Testis (tissue), 5 donors: ENCODE measurements at regions of chr2 and their contacts with region 1.

Region 1: GRCh38 chr2:207473049-207473930 is 56.5 kb upstream of the CREB1 start:
- DNase-seq: peak; percentile 71
- H3K4me3 ChIP-seq: no peak overlapping the region
- H3K27ac ChIP-seq: no peak overlapping the region
- H3K4me1 ChIP-seq: peaks cover 9% of the 10 kb centered on the region
- H3K27me3 ChIP-seq: no peaks in the 10 kb centered on the region
- CTCF ChIP-seq: peak; percentile 38 to 59 (median 50)
- POLR2A ChIP-seq: no peak

Region 2: DNA sequence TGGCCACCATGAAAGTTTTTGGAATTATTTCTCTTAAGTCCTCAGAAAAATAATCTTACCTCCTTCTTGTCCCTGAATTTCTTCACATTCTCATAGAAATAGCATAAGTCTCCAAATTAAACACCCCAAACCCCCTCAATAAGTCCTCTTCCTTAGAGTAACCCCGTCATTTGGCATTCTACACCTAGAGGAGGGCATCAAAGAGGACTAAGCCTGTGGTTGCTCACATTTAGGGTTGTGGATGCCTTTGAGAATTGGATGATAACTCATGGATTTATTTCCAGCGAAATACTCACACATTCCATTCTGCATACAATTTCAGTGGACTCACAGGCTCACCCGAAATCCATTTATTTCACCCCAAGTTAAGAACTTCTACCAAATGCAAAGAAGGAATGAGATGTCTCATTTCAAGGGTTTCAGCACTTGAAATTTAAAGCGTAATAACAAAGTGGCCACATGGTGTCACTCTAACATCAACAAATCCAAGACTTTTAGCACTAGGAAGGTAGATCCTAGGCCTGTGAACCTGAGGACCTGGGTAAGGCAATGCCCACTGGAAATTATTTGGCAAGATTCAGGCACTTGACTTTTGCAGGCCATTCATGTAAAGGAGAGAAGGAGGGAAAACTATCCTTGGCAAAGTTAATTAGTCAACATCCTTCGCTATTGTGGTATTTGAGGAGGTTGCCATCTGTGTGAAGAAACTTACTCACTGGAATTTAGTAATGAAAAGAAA is 779.7 kb before region 1 on chr2:
- intact Hi-C with region 1: loop called (anchors 10 kb)
- DNase-seq: peak; percentile 49
- H3K4me3 ChIP-seq: no peak overlapping the region
- H3K27ac ChIP-seq: no peak overlapping the region
- H3K4me1 ChIP-seq: no peaks in the 10 kb centered on the region
- H3K27me3 ChIP-seq: no peaks in the 10 kb centered on the region
- CTCF ChIP-seq: peak; percentile 30 to 74 (median 56)
- POLR2A ChIP-seq: no peak

Region 3: DNA sequence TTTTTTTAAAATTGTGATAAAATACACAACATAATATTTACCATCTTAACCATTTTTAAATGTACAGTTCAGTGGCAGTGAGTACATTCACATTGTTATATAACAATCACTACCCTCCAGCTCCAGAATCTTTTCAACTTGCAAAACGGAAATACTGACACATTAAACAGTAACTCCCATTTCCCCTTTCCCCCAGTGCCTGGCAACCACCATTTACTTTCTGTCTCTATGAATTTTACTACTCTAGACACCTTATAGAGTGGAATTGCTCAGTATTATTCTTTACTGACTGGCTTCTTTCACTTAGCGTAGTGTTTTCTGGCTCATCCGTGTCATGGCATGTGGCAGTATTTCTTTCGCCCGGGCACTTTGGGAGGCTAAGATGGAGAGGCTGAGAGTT is 675.3 kb before region 1 on chr2:
- intact Hi-C with region 1: loop called (anchors 10 kb)
- DNase-seq: no peak
- H3K4me3 ChIP-seq: no peak overlapping the region
- H3K27ac ChIP-seq: no peak overlapping the region
- H3K4me1 ChIP-seq: peaks cover 3% of the 10 kb centered on the region
- H3K27me3 ChIP-seq: no peaks in the 10 kb centered on the region
- CTCF ChIP-seq: no peak
- POLR2A ChIP-seq: no peak

Region 4: DNA sequence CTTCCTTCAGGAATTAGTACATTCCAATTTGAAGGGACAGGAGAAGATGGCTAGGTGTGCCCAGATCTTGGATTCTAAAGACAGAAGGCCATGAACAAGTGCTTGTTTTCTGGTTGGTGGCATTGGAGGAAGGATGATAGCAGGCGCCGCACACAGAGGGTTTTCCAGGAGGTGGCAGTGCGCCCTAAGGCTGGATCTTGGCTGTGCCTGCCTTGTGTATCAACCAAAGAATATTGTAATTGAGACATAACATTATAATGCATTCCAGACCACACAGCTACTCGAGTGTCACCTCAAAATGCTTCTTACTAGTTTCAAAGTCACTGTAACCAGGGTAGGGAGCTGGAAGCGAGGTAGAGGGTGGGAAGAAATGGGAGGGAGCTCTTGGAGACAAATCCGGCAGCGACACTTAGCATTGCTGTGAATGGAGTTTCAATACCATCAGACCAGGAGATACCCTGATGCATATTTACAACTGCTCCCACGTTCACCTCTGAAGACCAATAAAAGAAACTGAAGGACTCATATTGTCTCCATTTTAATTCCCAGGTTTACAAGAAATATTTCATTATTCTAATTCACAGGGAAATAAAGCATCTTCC is 491.4 kb before region 1 on chr2:
- intact Hi-C with region 1: loop called (anchors 5 kb)
- DNase-seq: peak; percentile 87
- H3K4me3 ChIP-seq: no peak overlapping the region
- H3K27ac ChIP-seq: no peak overlapping the region
- H3K4me1 ChIP-seq: peaks cover 5% of the 10 kb centered on the region
- H3K27me3 ChIP-seq: no peaks in the 10 kb centered on the region
- CTCF ChIP-seq: peak; percentile 49 to 73 (median 67)
- POLR2A ChIP-seq: no peak